ENCODE measurements at regions of chr4 and their contacts with region 1.

Region 1: GRCh38 chr4:87255755-87256154 is 35.3 kb upstream of the KLHL8 start:
- DNase-seq: no peak
- H3K4me3 Mint-ChIP-seq: no peak overlapping the region
- H3K27ac Mint-ChIP-seq: no peak overlapping the region
- H3K4me1 Mint-ChIP-seq: no peaks in the 10 kb centered on the region
- H3K27me3 Mint-ChIP-seq: no peaks in the 10 kb centered on the region

Region 2: GRCh38 chr4:87317543-87317942 is 61.8 kb after region 1 on chr4:
- intact Hi-C with region 1: loop called (anchors 2 kb)
- DNase-seq: no peak
- H3K4me3 Mint-ChIP-seq: no peak overlapping the region
- H3K27ac Mint-ChIP-seq: no peak overlapping the region
- H3K4me1 Mint-ChIP-seq: no peaks in the 10 kb centered on the region
- H3K27me3 Mint-ChIP-seq: peaks cover 2% of the 10 kb centered on the region

Region 3: GRCh38 chr4:88327665-88328064 is 1071.9 kb after region 1 on chr4:
- intact Hi-C with region 1: no loop called
- DNase-seq: no peak
- H3K4me3 Mint-ChIP-seq: no peak overlapping the region
- H3K27ac Mint-ChIP-seq: no peak overlapping the region
- H3K4me1 Mint-ChIP-seq: peaks cover under 1% of the 10 kb centered on the region
- H3K27me3 Mint-ChIP-seq: peaks cover 5% of the 10 kb centered on the region

Measured in activated T-helper 2 cell treated with anti-CD3 and anti-CD28 coated beads, Interferon-gamma antibody, Interleukin-2, Interleukin-4, amounts not matched to agents 10 μg/mL and 5 μg/mL and 100 μg/mL, durations not matched to agents 14 hours and 24 hours and 36 hours (primary cell).